ENCODE measurements at regions of chr20 and their contacts with region 1.

Region 1: GRCh38 chr20:50992733-50993457 is 30.0 kb downstream of the KCNG1 start:
- DNase-seq: peak; percentile 53
- CTCF ChIP-seq: peak; percentile 42

Region 2: DNA sequence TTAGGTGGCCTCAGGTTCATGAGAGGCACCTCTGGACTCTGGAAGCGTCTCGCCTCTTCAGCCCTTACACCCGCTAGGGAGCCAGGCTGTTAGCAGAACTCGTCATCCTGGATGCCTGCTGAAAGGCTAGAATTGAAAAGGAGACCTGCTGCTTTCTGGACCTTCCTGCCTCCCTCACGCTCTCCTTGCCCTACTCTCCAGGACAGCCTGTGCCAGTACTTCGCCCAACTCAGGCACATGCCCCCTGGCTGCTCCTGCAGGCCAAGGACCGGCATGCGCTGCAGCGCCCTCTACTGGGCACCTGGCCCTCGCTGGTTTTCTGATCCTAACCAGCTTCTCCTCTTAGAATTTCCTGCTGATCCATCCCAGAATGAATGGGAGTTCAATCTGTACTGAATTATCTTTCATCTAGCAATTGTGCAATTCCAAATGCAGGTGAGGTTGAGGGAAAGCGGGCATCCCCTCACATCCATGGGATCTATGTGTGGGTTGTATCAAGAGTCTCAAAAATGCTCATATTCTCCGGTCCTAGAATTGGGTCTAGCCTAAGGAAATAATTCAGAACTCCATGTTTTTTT is 404.8 kb before region 1 on chr20:
- CTCF ChIA-PET with region 1: no interaction called
- POLR2A ChIA-PET with region 1: no interaction called
- DNase-seq: peak; percentile 83
- CTCF ChIP-seq: peak; percentile 86

Region 3: GRCh38 chr20:50967586-50967985 is 25.3 kb before region 1 on chr20:
- CTCF ChIA-PET with region 1: interaction called, 43 read pairs
- POLR2A ChIA-PET with region 1: no interaction called
- DNase-seq: no peak
- CTCF ChIP-seq: no peak

Region 4: DNA sequence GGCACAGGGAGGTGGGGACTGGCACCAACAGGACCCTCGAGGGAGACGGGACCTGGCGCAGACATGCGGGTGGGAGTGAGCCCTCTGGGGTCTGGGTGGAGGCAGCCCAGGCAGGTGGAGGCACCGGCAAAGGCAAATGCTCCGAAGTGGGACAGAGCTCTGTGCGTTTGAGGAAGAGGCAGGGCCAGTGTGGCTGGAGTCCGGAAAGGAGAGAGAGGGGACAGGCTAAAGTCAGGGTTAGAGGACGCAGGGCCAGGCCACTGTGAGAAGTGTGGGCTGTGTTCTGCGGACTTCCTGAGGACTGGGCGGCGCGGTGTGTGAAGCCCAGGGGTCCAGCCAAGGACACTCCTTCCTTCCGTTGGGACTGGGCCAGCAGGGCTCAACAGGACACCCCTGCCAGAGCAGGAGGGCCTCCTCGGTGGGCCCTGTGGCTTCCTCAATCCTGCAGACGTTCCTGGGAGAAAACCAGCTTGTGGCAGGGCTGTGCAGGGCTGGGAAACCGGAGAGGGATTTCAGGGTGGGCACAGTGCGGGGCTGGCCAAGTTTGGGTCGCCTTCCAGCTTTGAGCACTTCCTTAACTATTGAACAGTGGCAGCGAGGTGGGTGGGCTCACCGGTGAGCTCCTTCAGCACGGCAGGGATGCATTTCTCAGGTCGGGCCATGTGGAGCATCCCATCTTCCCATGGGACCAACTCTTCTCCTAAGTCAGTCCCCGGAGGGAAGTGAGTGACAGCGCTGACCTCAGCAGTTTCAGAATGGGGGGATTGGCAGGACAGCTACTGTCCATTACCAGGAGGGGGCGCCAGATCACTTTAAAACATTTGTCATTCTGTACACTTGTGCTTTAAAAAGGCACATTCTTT is 11.8 kb before region 1 on chr20:
- CTCF ChIA-PET with region 1: interaction called, 43 read pairs
- POLR2A ChIA-PET with region 1: no interaction called
- DNase-seq: peak; percentile 75
- CTCF ChIP-seq: peak; percentile 74

Region 5: GRCh38 chr20:51014797-51015722 is 22.2 kb after region 1 on chr20:
- CTCF ChIA-PET with region 1: interaction called, 13 read pairs
- POLR2A ChIA-PET with region 1: no interaction called
- DNase-seq: peak; percentile 52
- CTCF ChIP-seq: peak; percentile 44

Region 6: DNA sequence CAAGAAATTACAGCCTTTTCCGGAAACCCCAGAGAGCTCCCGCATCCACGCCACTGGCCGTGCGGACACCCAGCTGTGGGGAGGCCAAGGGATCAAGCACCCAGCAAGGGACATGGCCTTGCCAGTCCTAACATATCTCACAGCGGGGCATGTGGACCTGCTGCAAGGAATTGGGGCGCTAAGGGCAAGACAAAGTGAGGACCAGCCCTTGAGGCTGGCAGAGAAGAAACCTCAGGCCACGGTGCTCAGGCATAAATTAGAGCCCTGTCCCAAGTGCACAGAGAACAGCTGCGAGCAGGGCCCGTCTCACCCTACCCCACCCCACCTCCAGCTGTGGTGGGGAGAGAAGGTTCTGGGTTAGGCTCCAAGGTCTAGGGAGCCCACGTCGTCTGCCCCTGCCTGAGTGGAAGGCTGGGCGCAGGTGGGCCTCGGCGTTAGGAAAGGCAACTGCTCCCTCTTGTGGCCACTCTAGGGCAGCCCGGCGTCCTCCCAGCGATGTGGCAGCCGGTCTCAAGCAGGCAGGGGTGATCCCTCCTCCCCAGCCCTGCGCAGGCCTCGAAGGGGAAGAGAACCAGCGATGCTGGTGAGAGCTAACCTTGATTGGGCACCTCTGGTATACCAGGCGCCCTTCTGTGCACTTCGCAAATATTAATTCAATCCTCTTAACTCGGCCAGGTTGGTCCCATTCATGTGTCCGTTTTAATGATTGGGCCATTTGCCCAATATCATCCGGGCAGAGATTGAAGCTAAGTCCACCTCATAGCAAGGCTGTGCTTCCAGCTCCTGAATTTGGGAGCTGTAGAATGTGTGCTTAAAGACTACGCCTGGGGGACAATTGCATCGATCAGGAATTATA is 313.8 kb after region 1 on chr20:
- CTCF ChIA-PET with region 1: interaction called, 194 read pairs
- POLR2A ChIA-PET with region 1: no interaction called
- DNase-seq: peak; percentile 87
- CTCF ChIP-seq: peak; percentile 96

Region 7: GRCh38 chr20:51326201-51326819 is 333.4 kb after region 1 on chr20:
- CTCF ChIA-PET with region 1: interaction called, 125 read pairs
- POLR2A ChIA-PET with region 1: no interaction called
- DNase-seq: peak; percentile 40
- CTCF ChIP-seq: peak; percentile 53

Measured in GM10248 (cell line).